ENCODE measurements at regions of chr11 and their contacts with region 1.

Region 1: GRCh38 chr11:65314501-65315203 is at the start of gene CDC42EP2:
- DNase-seq: peak; percentile 84
- H3K4me3 Mint-ChIP-seq: peak within 1 kb of the TSS; percentile 69
- H3K27ac Mint-ChIP-seq: no peak within 1 kb of the TSS
- H3K4me1 Mint-ChIP-seq: peaks cover 10% of the 10 kb centered on the region
- H3K27me3 Mint-ChIP-seq: peaks cover 10% of the 10 kb centered on the region
- total RNA-seq, gene CDC42EP2: 0.26 TPM in 1 of 2 experiments, not detected in the other

Region 2: GRCh38 chr11:65194564-65194963 is 120.1 kb before region 1 on chr11:
- CTCF ChIA-PET with region 1: interaction called, 10 read pairs
- POLR2A ChIA-PET with region 1: no interaction called
- intact Hi-C with region 1: no loop called
- DNase-seq: no peak
- H3K4me3 Mint-ChIP-seq: no peak overlapping the region
- H3K27ac Mint-ChIP-seq: no peak overlapping the region
- H3K4me1 Mint-ChIP-seq: no peaks in the 10 kb centered on the region
- H3K27me3 Mint-ChIP-seq: no peaks in the 10 kb centered on the region

Region 3: DNA sequence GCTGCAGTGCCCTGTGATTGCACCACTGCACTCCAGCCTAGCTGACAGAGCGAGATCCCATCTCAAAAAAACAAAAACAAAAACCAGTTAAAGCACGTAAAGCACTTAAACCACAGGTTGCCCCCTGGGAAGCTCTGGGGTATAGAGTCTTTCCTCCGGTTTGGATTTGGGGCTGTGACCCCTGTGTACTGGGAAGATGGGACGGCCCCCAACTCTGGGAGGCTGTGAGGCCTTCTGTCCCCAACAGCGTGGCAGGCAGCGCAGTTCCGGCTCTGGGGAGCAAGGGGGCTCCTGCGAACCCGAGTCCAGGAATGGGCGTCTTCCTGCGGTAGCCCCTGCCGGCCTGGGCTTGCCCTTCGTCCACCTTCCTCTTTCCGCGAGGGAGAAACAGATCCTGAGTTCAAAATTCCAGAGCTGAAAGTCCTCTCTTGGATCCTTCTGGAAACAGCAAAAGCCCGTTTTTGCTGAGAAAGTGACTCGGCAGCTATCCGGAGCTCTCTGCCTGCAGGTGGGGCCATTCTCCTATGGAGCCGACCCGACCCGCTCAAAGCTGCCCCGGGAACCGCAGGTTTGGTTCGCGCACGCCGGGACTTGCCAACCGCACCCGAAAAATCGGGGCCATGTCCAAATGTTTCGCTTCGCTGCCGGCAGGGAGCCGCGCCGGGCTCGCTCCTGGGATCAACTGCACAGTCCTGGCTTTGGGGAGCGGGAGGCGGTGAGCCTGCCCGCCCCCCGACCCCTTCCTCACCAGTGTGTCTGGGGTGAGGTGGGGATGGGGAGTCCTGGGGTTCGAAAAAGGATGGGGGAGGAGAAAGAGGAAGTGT is 89.2 kb before region 1 on chr11:
- CTCF ChIA-PET with region 1: interaction called, 155 read pairs
- POLR2A ChIA-PET with region 1: interaction called, 3 read pairs
- intact Hi-C with region 1: loop called (anchors 1 kb)
- DNase-seq: peak; percentile 76
- H3K4me3 Mint-ChIP-seq: peak overlapping the region; percentile 72
- H3K27ac Mint-ChIP-seq: no peak overlapping the region
- H3K4me1 Mint-ChIP-seq: peaks cover 7% of the 10 kb centered on the region
- H3K27me3 Mint-ChIP-seq: peaks cover 24% of the 10 kb centered on the region

Region 4: GRCh38 chr11:65251476-65251875 is 63.2 kb before region 1 on chr11:
- CTCF ChIA-PET with region 1: interaction called, 21 read pairs
- POLR2A ChIA-PET with region 1: no interaction called
- intact Hi-C with region 1: no loop called
- DNase-seq: no peak
- H3K4me3 Mint-ChIP-seq: no peak overlapping the region
- H3K27ac Mint-ChIP-seq: no peak overlapping the region
- H3K4me1 Mint-ChIP-seq: peaks cover 2% of the 10 kb centered on the region
- H3K27me3 Mint-ChIP-seq: peaks cover 5% of the 10 kb centered on the region

Region 5: GRCh38 chr11:65274735-65275682 is 39.6 kb before region 1 on chr11:
- CTCF ChIA-PET with region 1: interaction called, 104 read pairs
- POLR2A ChIA-PET with region 1: interaction called, 3 read pairs
- intact Hi-C with region 1: loop called (anchors 1 kb)
- DNase-seq: peak; percentile 45
- H3K4me3 Mint-ChIP-seq: no peak overlapping the region
- H3K27ac Mint-ChIP-seq: no peak overlapping the region
- H3K4me1 Mint-ChIP-seq: peaks cover 19% of the 10 kb centered on the region
- H3K27me3 Mint-ChIP-seq: no peaks in the 10 kb centered on the region

Region 6: GRCh38 chr11:65354265-65355012 is 39.8 kb after region 1 on chr11 and contains the start of gene TIGD3:
- CTCF ChIA-PET with region 1: interaction called, 10 read pairs
- POLR2A ChIA-PET with region 1: no interaction called
- intact Hi-C with region 1: no loop called
- DNase-seq: peak; percentile 98
- H3K4me3 Mint-ChIP-seq: peak within 1 kb of the TSS; percentile 80
- H3K27ac Mint-ChIP-seq: peak within 1 kb of the TSS; percentile 60
- H3K4me1 Mint-ChIP-seq: peaks cover 12% of the 10 kb centered on the region
- H3K27me3 Mint-ChIP-seq: no peaks in the 10 kb centered on the region
- total RNA-seq, gene TIGD3: 0.73 to 1.00 TPM

Region 7: GRCh38 chr11:65927904-65928397 is 613.3 kb after region 1 on chr11:
- CTCF ChIA-PET with region 1: no interaction called
- POLR2A ChIA-PET with region 1: no interaction called
- intact Hi-C with region 1: no loop called
- DNase-seq: peak; percentile 89
- H3K4me3 Mint-ChIP-seq: peak overlapping the region; percentile 67
- H3K27ac Mint-ChIP-seq: peak overlapping the region; percentile 96
- H3K4me1 Mint-ChIP-seq: peaks cover 26% of the 10 kb centered on the region
- H3K27me3 Mint-ChIP-seq: no peaks in the 10 kb centered on the region

Measured in activated CD4-positive, alpha-beta memory T cell treated with anti-CD3 and anti-CD28 coated beads for 36 hours (primary cell).